Lower leg skin (tissue), 4 donors: ENCODE measurements at regions of chr1 and their contacts with region 1.

Region 1: GRCh38 chr1:219757890-219758289 is 145.0 kb upstream of the ZC3H11B start:
- DNase-seq: no peak
- H3K4me3 ChIP-seq: no peak overlapping the region
- CTCF ChIP-seq: no peak
- POLR2A ChIP-seq: no peak

Region 2: DNA sequence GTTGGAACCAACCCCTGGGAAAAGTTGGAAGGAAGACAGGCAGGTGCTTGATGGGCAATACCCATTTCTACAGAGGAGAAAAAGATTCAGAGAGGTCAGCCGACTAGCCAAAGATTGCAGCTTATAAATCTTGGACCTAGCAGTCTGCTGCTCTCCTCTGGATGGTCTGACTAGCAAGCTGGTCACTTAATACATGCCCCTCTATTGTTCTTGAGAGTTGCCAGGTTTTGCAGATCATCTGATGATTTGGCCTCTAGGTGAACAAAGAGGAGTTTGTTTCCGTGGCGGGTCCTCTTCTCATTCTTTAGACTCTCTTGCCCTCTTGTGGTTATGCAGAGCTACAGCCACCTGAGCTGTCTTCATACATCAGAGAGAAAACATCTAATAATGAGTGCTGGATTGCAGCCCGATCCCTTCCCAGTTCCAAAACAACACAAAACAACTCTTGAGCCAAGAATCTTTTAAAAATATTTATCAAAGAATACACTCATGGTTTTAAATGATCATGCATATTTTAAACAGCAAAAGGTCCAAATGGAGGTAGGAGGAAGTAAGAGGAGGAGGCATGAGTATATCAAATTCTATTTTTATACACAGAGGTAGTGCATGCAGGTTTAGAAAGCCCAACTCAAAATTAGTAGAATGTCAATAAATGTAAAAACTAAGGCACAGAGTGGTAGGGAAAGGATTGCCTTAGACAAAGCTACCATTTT is 54.8 kb after region 1 on chr1:
- intact Hi-C with region 1: no loop called
- DNase-seq: peak in 1 of 2 donors; percentile 21
- H3K4me3 ChIP-seq: no peak overlapping the region
- CTCF ChIP-seq: peak in 1 of 3 donors; percentile 42
- POLR2A ChIP-seq: no peak

Region 3: GRCh38 chr1:219837274-219837993 is 79.5 kb after region 1 on chr1:
- intact Hi-C with region 1: loop called (anchors 1 kb)
- DNase-seq: no peak
- H3K4me3 ChIP-seq: no peak overlapping the region
- CTCF ChIP-seq: no peak
- POLR2A ChIP-seq: no peak